Activated CD4-positive, alpha-beta memory T cell treated with anti-CD3 and anti-CD28 coated beads, Interleukin-2, amount 10 ng/mL, durations not matched to agents 7 days and 5 days (primary cell): ENCODE measurements at regions of chr6 and their contacts with region 1.

Region 1: DNA sequence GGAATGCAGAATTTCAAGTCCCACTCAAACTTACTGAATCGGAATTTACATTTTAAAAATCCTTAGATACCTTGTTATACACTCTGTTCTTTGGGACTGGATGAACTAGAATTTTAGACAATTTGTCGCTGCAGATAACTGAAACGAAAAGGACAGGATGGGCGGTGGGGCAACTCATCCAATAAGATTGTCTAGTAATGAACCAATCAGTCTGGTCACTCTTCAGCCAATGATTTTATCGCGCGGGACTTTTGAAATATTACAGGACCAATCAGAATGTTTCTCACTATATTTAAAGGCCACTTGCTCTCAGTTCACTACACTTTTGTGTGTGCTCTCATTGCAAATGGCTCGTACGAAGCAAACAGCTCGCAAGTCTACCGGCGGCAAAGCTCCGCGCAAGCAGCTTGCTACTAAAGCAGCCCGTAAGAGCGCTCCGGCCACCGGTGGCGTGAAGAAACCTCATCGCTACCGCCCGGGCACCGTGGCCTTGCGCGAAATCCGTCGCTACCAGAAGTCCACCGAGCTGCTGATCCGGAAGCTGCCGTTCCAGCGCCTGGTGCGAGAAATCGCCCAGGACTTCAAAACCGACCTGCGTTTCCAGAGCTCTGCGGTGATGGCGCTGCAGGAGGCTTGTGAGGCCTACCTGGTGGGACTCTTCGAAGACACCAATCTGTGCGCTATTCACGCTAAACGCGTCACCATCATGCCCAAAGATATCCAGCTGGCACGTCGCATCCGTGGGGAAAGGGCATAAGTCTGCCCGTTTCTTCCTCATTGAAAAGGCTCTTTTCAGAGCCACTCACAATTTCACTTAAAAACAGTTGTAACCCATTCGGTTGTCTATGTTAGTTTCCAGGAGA is 41.9 kb upstream of the HFE start:
- DNase-seq: peak; percentile 82
- H3K4me3 Mint-ChIP-seq: peak overlapping the region; percentile 79
- H3K27ac Mint-ChIP-seq: peak overlapping the region; percentile 99
- H3K4me1 Mint-ChIP-seq: peaks cover 44% of the 10 kb centered on the region
- H3K27me3 Mint-ChIP-seq: no peaks in the 10 kb centered on the region

Region 2: GRCh38 chr6:25756382-25757363 is 288.6 kb before region 1 on chr6:
- CTCF ChIA-PET with region 1: no interaction called
- POLR2A ChIA-PET with region 1: no interaction called
- DNase-seq: no peak
- H3K4me3 Mint-ChIP-seq: no peak overlapping the region
- H3K27ac Mint-ChIP-seq: no peak overlapping the region
- H3K4me1 Mint-ChIP-seq: no peaks in the 10 kb centered on the region
- H3K27me3 Mint-ChIP-seq: peaks cover 35% of the 10 kb centered on the region

Region 3: GRCh38 chr6:26097268-26097875 is 52.1 kb after region 1 on chr6:
- CTCF ChIA-PET with region 1: interaction called, 5 read pairs
- POLR2A ChIA-PET with region 1: interaction called, 74 read pairs
- DNase-seq: peak; percentile 64
- H3K4me3 Mint-ChIP-seq: no peak overlapping the region
- H3K27ac Mint-ChIP-seq: no peak overlapping the region
- H3K4me1 Mint-ChIP-seq: peaks cover 10% of the 10 kb centered on the region
- H3K27me3 Mint-ChIP-seq: peaks cover 11% of the 10 kb centered on the region

Region 4: DNA sequence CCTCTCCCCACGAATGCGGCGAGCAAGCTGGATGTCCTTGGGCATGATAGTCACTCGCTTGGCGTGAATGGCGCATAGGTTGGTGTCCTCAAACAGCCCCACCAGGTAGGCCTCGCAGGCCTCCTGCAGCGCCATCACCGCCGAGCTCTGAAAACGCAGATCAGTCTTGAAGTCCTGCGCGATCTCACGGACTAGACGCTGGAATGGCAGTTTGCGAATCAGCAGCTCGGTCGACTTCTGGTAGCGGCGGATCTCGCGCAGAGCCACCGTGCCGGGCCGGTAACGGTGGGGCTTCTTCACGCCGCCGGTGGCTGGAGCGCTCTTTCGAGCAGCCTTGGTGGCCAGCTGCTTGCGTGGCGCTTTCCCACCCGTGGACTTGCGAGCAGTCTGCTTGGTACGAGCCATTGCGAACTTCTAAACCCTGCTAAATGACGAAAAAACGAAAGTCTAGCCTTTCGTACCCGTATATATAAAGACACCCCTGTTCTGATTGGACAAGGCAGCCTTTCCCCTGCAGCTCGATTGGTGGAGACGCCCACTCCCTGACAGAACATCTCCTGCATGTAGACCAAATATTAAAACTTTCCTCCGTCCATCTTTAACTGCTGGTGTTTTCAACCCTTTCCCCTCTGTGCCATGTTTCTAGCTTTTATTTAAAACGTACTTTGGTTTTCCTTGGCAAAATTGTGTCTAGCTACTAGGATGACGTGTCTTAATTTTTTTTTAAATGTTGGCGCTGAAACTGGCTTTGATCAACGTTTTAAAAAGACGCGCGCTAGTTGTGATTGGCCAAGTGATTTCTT is 151.8 kb after region 1 on chr6:
- CTCF ChIA-PET with region 1: interaction called, 3 read pairs
- POLR2A ChIA-PET with region 1: interaction called, 184 read pairs
- DNase-seq: peak; percentile 85
- H3K4me3 Mint-ChIP-seq: peak overlapping the region; percentile 93
- H3K27ac Mint-ChIP-seq: peak overlapping the region; percentile 96
- H3K4me1 Mint-ChIP-seq: peaks cover 49% of the 10 kb centered on the region
- H3K27me3 Mint-ChIP-seq: no peaks in the 10 kb centered on the region

Region 5: DNA sequence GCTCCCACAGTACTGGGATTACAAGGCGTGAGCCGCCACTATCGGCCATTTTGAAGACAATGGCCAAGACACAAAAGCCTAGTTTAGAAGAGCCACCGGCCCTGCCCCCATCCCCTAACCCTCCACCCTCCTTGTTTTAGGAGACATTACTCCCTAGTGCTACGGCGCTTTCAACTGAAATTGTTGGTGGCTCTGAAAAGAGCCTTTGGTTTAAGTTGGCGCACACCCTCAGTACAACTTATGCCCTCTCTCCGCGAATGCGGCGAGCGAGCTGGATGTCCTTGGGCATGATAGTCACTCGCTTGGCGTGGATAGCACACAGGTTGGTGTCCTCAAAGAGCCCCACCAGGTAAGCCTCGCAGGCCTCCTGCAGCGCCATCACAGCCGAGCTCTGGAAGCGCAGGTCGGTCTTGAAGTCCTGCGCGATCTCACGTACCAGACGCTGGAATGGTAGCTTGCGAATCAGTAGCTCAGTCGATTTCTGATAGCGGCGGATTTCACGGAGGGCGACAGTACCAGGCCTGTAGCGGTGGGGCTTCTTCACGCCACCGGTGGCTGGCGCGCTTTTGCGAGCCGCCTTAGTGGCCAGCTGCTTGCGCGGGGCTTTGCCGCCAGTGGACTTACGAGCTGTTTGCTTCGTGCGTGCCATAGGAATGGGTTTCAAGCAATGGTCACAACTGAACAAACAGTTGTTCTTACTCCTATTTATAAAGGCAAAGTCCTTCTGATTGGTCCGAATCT is 204.8 kb after region 1 on chr6:
- CTCF ChIA-PET with region 1: no interaction called
- POLR2A ChIA-PET with region 1: interaction called, 24 read pairs
- DNase-seq: peak; percentile 84
- H3K4me3 Mint-ChIP-seq: peak overlapping the region; percentile 90
- H3K27ac Mint-ChIP-seq: peak overlapping the region; percentile 93
- H3K4me1 Mint-ChIP-seq: peaks cover 42% of the 10 kb centered on the region
- H3K27me3 Mint-ChIP-seq: no peaks in the 10 kb centered on the region

Region 6: GRCh38 chr6:27838058-27838944 is 1793.0 kb after region 1 on chr6:
- CTCF ChIA-PET with region 1: no interaction called
- POLR2A ChIA-PET with region 1: interaction called, 45 read pairs
- DNase-seq: peak; percentile 90
- H3K4me3 Mint-ChIP-seq: no peak overlapping the region
- H3K27ac Mint-ChIP-seq: no peak overlapping the region
- H3K4me1 Mint-ChIP-seq: peaks cover 31% of the 10 kb centered on the region
- H3K27me3 Mint-ChIP-seq: no peaks in the 10 kb centered on the region